CD4-positive, alpha-beta memory T cell (primary cell): ENCODE measurements at regions of chr22 and their contacts with region 1.

Region 1: GRCh38 chr22:37316875-37317371 is 34.6 kb downstream of the CYTH4 start:
- DNase-seq: peak; percentile 63 to 76 (median 69)
- H3K4me3 ChIP-seq: no peak overlapping the region
- H3K4me3 Mint-ChIP-seq: no peak overlapping the region
- H3K27ac ChIP-seq: no peak overlapping the region
- H3K27ac Mint-ChIP-seq: peak overlapping the region in 3 of 7 donors; percentile 8 to 48 (median 12)
- H3K4me1 ChIP-seq: peaks cover 32% of the 10 kb centered on the region
- H3K4me1 Mint-ChIP-seq: peaks cover 15 to 47% (median 31%) of the 10 kb centered on the region in 4 donors
- H3K27me3 ChIP-seq: no peaks in the 10 kb centered on the region
- H3K27me3 Mint-ChIP-seq: peaks cover 0 to 2% of the 10 kb centered on the region in 2 donors

Region 2: DNA sequence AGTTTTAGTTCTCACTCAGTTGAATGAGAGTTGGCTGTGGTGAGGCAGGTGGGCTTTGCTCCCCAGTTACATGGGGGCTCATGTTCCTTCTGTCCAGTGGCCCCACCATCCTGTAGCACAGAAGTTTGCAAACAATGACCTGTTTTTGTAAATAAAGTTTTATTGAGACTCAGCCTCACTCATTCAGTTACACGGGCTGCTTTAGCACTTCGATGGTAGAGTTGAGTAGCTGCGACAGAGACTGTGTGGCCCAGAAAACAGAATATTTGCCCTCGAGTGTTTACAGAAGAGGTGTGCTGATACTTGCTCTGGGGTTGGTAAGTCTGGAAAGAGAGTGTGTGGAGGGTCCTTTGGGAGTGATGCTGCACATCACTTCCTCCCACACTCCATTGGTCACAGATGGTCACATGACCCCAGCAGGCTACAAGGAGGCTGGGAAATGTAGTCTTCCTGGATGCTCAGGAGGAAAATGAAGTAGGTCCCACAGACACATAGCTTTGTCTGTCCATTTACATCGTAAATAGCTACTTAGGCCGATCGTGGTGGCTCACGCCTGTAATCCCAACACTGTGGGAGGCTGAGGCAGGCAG is 575.6 kb before region 1 on chr22:
- CTCF ChIA-PET with region 1: no interaction called
- POLR2A ChIA-PET with region 1: no interaction called
- intact Hi-C with region 1: no loop called
- DNase-seq: no peak
- H3K4me3 ChIP-seq: no peak overlapping the region
- H3K4me3 Mint-ChIP-seq: no peak overlapping the region
- H3K27ac ChIP-seq: no peak overlapping the region
- H3K27ac Mint-ChIP-seq: no peak overlapping the region
- H3K4me1 ChIP-seq: no peaks in the 10 kb centered on the region
- H3K4me1 Mint-ChIP-seq: no peaks in the 10 kb centered on the region
- H3K27me3 ChIP-seq: no peaks in the 10 kb centered on the region
- H3K27me3 Mint-ChIP-seq: peaks cover 12 to 19% of the 10 kb centered on the region in 2 donors

Region 3: DNA sequence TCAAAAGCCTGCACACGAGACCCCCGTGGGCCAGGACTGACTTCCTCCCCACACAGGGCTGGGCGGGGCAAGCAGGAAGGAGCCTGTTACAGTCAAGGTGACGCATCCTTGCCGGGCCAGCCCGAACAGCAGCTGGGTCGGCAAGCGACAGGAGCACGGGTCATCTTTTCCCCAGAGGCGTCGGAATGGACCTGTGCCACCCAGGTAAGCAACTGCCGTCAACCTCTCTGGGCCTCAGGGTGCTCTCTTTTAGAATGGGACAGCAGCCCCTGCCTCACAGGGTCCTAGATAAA is 34.6 kb before region 1 on chr22 and contains the start of gene CYTH4:
- CTCF ChIA-PET with region 1: interaction called, 17 read pairs
- POLR2A ChIA-PET with region 1: interaction called, 147 read pairs
- intact Hi-C with region 1: no loop called
- DNase-seq: peak; percentile 52 to 87 (median 65)
- H3K4me3 ChIP-seq: peak within 1 kb of the TSS; percentile 98 to 99
- H3K4me3 Mint-ChIP-seq: peak within 1 kb of the TSS; percentile 89 to 100 (median 94)
- H3K27ac ChIP-seq: peak within 1 kb of the TSS; percentile 81
- H3K27ac Mint-ChIP-seq: peak within 1 kb of the TSS; percentile 83 to 99 (median 96)
- H3K4me1 ChIP-seq: peaks cover 46% of the 10 kb centered on the region
- H3K4me1 Mint-ChIP-seq: peaks cover 33 to 56% (median 44%) of the 10 kb centered on the region in 4 donors
- H3K27me3 ChIP-seq: no peaks in the 10 kb centered on the region
- H3K27me3 Mint-ChIP-seq: no peaks in the 10 kb centered on the region
- total RNA-seq, gene CYTH4: 169 to 177 TPM

Region 4: DNA sequence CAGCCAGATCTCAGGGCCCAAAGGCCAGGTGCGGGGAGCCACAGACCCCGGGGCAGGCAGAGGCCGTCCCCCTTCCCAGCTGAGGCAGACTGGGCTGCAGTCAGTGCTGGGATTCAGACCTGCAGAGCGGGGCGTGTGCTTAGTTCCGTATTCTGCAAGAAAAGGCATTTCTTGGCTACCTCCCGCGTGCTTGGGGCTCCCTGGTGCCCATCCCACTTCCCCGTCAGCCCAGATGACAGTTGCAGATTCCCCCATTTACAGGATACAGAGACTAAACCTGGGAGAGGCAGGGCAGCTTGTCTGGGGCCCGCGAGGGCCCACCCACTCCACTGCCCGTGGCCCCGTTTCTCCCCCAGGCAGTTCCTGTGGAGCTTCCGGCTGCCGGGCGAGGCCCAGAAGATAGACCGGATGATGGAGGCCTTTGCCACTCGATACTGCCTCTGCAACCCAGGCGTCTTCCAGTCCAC is 16.3 kb before region 1 on chr22:
- CTCF ChIA-PET with region 1: interaction called, 10 read pairs
- POLR2A ChIA-PET with region 1: interaction called, 44 read pairs
- intact Hi-C with region 1: no loop called
- DNase-seq: peak; percentile 43 to 66 (median 48)
- H3K4me3 ChIP-seq: peak overlapping the region in 1 of 2 donors; percentile 21
- H3K4me3 Mint-ChIP-seq: peak overlapping the region; percentile 9 to 85 (median 80)
- H3K27ac ChIP-seq: peak overlapping the region; percentile 72
- H3K27ac Mint-ChIP-seq: peak overlapping the region; percentile 92 to 97 (median 96)
- H3K4me1 ChIP-seq: peaks cover 92% of the 10 kb centered on the region
- H3K4me1 Mint-ChIP-seq: peaks cover 47 to 82% (median 64%) of the 10 kb centered on the region in 4 donors
- H3K27me3 ChIP-seq: no peaks in the 10 kb centered on the region
- H3K27me3 Mint-ChIP-seq: no peaks in the 10 kb centered on the region

Region 5: GRCh38 chr22:37428649-37429586 is 112.0 kb after region 1 on chr22:
- CTCF ChIA-PET with region 1: interaction called, 44 read pairs
- POLR2A ChIA-PET with region 1: interaction called, 4 read pairs
- intact Hi-C with region 1: loop called (anchors 1 kb)
- DNase-seq: peak in 4 of 5 donors; percentile 45 to 58 (median 55)
- H3K4me3 ChIP-seq: no peak overlapping the region
- H3K4me3 Mint-ChIP-seq: peak overlapping the region in 6 of 8 donors; percentile 9 to 67 (median 32)
- H3K27ac ChIP-seq: no peak overlapping the region
- H3K27ac Mint-ChIP-seq: peak overlapping the region in 1 of 7 donors; percentile 11
- H3K4me1 ChIP-seq: peaks cover 16% of the 10 kb centered on the region
- H3K4me1 Mint-ChIP-seq: peaks cover 3 to 22% (median 13%) of the 10 kb centered on the region in 4 donors
- H3K27me3 ChIP-seq: peaks cover 28% of the 10 kb centered on the region
- H3K27me3 Mint-ChIP-seq: peaks cover 43 to 56% of the 10 kb centered on the region in 2 donors

Region 6: DNA sequence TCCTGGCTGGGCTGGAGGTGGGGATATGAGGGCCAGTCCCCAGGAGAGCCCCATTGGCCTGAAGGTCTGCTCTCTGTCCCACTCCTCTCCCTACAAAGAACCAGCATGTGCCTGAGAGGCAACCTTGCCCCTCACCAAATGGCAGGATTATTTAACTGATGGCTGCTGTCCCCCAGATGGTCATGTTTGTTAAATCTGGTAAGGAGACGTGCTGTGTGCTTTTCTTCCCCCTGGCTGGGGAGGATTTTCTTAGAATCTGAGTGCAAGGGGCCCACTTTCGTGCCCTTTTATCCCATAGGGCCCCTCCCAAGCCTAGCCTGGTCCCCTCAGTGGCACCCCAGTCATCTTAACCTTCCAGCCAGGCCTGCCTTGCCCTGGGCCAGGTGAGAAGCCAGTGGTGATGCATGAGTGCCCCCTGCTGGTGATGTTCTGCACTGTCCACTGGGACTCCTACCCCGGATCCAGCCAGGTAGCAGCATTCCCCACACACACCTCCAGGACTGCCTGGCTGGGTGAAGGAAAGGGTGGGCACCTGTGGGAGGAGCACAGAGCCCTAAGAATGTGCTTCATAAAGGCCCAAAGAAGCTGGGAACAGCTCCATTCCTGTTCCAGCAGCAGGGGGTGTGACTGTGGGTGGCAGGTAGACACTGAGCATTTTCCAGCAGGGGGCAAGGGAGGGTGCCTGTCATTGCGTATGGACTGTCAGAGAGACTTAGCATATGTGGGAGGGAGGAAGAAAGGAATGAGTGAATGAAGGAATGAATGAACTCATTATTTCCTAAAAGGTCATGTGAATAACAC is 140.4 kb after region 1 on chr22:
- CTCF ChIA-PET with region 1: interaction called, 38 read pairs
- POLR2A ChIA-PET with region 1: no interaction called
- intact Hi-C with region 1: loop called (anchors 1 kb)
- DNase-seq: peak; percentile 74 to 80 (median 77)
- H3K4me3 ChIP-seq: no peak overlapping the region
- H3K4me3 Mint-ChIP-seq: no peak overlapping the region
- H3K27ac ChIP-seq: no peak overlapping the region
- H3K27ac Mint-ChIP-seq: peak overlapping the region in 6 of 7 donors; percentile 15 to 57 (median 22)
- H3K4me1 ChIP-seq: peaks cover 3% of the 10 kb centered on the region
- H3K4me1 Mint-ChIP-seq: peaks cover 0 to 7% (median 5%) of the 10 kb centered on the region in 4 donors
- H3K27me3 ChIP-seq: no peaks in the 10 kb centered on the region
- H3K27me3 Mint-ChIP-seq: no peaks in the 10 kb centered on the region

Region 7: GRCh38 chr22:37498289-37498909 is 181.5 kb after region 1 on chr22:
- CTCF ChIA-PET with region 1: interaction called, 16 read pairs
- POLR2A ChIA-PET with region 1: no interaction called
- intact Hi-C with region 1: loop called (anchors 1 kb)
- DNase-seq: peak; percentile 68 to 72 (median 70)
- H3K4me3 ChIP-seq: no peak overlapping the region
- H3K4me3 Mint-ChIP-seq: no peak overlapping the region
- H3K27ac ChIP-seq: no peak overlapping the region
- H3K27ac Mint-ChIP-seq: no peak overlapping the region
- H3K4me1 ChIP-seq: peaks cover 19% of the 10 kb centered on the region
- H3K4me1 Mint-ChIP-seq: peaks cover 8 to 25% (median 16%) of the 10 kb centered on the region in 4 donors
- H3K27me3 ChIP-seq: peaks cover 3% of the 10 kb centered on the region
- H3K27me3 Mint-ChIP-seq: no peaks in the 10 kb centered on the region

Region 8: GRCh38 chr22:37566903-37567820 is 250.2 kb after region 1 on chr22:
- CTCF ChIA-PET with region 1: interaction called, 20 read pairs
- POLR2A ChIA-PET with region 1: interaction called, 7 read pairs
- intact Hi-C with region 1: loop called (anchors 1 kb)
- DNase-seq: peak; percentile 87 to 91 (median 89)
- H3K4me3 ChIP-seq: peak overlapping the region; percentile 6 to 15
- H3K4me3 Mint-ChIP-seq: peak overlapping the region; percentile 58 to 85 (median 70)
- H3K27ac ChIP-seq: no peak overlapping the region
- H3K27ac Mint-ChIP-seq: peak overlapping the region; percentile 8 to 81 (median 57)
- H3K4me1 ChIP-seq: peaks cover 23% of the 10 kb centered on the region
- H3K4me1 Mint-ChIP-seq: peaks cover 11 to 36% (median 25%) of the 10 kb centered on the region in 4 donors
- H3K27me3 ChIP-seq: peaks cover 11% of the 10 kb centered on the region
- H3K27me3 Mint-ChIP-seq: peaks cover 14 to 24% of the 10 kb centered on the region in 2 donors